Aorta (tissue), 5 donors: ENCODE measurements at regions of chr22 and their contacts with region 1.

Region 1: DNA sequence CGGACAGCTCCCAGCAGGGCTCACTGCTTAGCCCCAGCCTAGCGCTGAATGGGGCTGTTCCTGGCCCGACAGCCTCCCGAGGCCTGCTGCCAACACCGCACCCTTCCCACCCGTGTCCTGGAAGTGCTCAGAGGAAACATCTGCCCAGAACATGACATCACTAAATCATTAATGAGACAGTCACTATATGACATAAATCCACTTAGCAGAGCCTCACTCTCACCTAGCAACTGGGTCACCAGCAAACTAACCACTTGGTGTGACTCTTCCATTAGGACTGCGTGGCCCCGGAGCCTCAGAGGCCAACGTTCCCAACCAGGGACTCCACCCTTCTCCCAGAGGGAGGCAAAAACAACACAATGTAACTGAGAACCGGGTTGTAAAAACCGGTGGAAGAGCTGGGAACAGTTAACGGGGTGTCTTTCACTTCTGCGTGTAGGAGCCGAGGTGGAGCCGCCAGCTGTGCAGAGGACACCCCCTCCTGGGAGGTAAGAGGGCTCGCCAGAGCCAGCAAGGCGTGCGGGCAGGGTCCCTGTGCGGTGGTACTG is 21.4 kb upstream of the PACSIN2 start:
- DNase-seq: peak; percentile 70 to 88
- ATAC-seq: peak; percentile 77
- H3K4me3 ChIP-seq: no peak overlapping the region
- H3K27ac ChIP-seq: no peak overlapping the region
- H3K4me1 ChIP-seq: no peaks in the 10 kb centered on the region
- H3K27me3 ChIP-seq: no peaks in the 10 kb centered on the region

Region 2: DNA sequence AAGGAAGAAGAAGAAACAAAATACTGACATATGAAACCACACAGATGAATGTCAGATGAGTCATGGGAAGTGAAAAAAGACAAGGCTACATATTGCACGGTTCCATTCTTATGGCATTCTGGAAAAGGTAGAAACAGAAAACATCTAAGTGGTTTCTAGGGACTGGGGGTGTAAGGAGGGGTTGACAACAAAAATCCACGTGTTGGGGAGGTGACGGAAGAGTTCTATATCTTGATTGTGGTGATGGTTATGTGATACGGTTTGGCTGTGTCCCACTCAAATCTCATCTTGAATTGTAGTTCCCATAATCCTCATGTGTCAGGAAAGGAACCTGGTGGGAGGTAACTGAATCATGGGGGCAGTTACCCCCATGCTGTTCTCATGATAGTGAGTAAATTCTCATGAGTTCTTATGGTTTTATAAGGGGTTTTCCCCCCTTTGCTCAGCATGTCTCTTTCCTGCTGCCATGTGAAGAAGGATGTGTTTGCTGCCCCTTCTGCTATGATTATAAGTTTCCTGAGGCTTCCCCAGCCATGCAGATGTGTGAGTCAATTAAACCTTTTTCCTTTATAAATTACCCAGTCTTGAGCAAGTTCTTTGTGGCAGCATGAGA is 172.9 kb before region 1 on chr22:
- intact Hi-C with region 1: loop called (anchors 2 to 10 kb)
- DNase-seq: no peak
- ATAC-seq: no peak
- H3K4me3 ChIP-seq: no peak overlapping the region
- H3K27ac ChIP-seq: no peak overlapping the region
- H3K4me1 ChIP-seq: peaks cover 0 to 2% of the 10 kb centered on the region in 2 donors
- H3K27me3 ChIP-seq: no peaks in the 10 kb centered on the region

Region 3: GRCh38 chr22:43100211-43100610 is 63.9 kb after region 1 on chr22:
- intact Hi-C with region 1: no loop called
- DNase-seq: no peak
- ATAC-seq: no peak
- H3K4me3 ChIP-seq: no peak overlapping the region
- H3K27ac ChIP-seq: no peak overlapping the region
- H3K4me1 ChIP-seq: no peaks in the 10 kb centered on the region
- H3K27me3 ChIP-seq: no peaks in the 10 kb centered on the region